ENCODE measurements at regions of chr1 and their contacts with region 1.

Region 1: DNA sequence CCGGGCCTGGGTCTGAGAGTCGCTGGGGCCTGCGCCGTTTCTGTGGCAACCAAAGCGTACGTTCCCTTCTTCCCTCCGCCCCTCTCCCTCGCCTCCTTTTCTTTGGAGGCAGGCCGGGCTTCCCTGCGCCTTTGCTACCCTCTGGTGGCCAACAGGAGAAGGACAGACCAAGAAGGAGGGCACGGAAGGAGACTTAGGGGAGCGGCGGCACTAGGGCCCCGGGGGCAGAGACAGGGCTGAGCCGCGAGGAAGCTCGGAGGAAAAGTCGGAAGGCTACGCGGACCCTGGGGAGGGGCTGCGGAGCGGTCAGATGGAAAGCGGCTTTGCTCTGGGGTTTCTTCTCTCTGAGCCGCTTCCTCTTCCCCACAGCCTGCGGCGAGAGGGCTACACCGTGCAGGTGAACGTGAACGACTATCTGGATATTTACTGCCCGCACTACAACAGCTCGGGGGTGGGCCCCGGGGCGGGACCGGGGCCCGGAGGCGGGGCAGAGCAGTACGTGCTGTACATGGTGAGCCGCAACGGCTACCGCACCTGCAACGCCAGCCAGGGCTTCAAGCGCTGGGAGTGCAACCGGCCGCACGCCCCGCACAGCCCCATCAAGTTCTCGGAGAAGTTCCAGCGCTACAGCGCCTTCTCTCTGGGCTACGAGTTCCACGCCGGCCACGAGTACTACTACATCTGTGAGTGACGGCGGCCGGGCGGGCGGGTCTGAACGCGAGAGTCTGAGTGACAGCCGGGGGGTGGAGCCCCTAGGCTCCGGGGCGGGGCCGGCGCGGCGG is 6.3 kb downstream of the EFNA3 start:
- DNase-seq: peak; percentile 80 to 94 (median 92)
- ATAC-seq: peak; percentile 73
- H3K4me3 ChIP-seq: peak overlapping the region; percentile 82 to 92
- H3K4me3 Mint-ChIP-seq: peak overlapping the region; percentile 95
- H3K27ac ChIP-seq: peak overlapping the region; percentile 57 to 85
- H3K27ac Mint-ChIP-seq: peak overlapping the region; percentile 90
- H3K4me1 ChIP-seq: peaks cover 54% of the 10 kb centered on the region
- H3K4me1 Mint-ChIP-seq: peaks cover 39% of the 10 kb centered on the region
- H3K27me3 ChIP-seq: peaks cover 39 to 44% of the 10 kb centered on the region in 2 experiments
- H3K27me3 Mint-ChIP-seq: peaks cover 30% of the 10 kb centered on the region
- CTCF ChIP-seq: peak; percentile 84

Region 2: GRCh38 chr1:154669464-154670282 is 415.2 kb before region 1 on chr1:
- CTCF ChIA-PET with region 1: no interaction called
- POLR2A ChIA-PET with region 1: no interaction called
- intact Hi-C with region 1: loop called in 1 of 2 experiments (anchors 1 kb)
- DNase-seq: peak; percentile 48 to 86 (median 74)
- ATAC-seq: peak; percentile 100
- H3K4me3 ChIP-seq: no peak overlapping the region
- H3K4me3 Mint-ChIP-seq: no peak overlapping the region
- H3K27ac ChIP-seq: no peak overlapping the region
- H3K27ac Mint-ChIP-seq: no peak overlapping the region
- H3K4me1 ChIP-seq: peaks cover 3% of the 10 kb centered on the region
- H3K4me1 Mint-ChIP-seq: no peaks in the 10 kb centered on the region
- H3K27me3 ChIP-seq: no peaks in the 10 kb centered on the region
- H3K27me3 Mint-ChIP-seq: no peaks in the 10 kb centered on the region
- CTCF ChIP-seq: peak; percentile 80

Region 3: DNA sequence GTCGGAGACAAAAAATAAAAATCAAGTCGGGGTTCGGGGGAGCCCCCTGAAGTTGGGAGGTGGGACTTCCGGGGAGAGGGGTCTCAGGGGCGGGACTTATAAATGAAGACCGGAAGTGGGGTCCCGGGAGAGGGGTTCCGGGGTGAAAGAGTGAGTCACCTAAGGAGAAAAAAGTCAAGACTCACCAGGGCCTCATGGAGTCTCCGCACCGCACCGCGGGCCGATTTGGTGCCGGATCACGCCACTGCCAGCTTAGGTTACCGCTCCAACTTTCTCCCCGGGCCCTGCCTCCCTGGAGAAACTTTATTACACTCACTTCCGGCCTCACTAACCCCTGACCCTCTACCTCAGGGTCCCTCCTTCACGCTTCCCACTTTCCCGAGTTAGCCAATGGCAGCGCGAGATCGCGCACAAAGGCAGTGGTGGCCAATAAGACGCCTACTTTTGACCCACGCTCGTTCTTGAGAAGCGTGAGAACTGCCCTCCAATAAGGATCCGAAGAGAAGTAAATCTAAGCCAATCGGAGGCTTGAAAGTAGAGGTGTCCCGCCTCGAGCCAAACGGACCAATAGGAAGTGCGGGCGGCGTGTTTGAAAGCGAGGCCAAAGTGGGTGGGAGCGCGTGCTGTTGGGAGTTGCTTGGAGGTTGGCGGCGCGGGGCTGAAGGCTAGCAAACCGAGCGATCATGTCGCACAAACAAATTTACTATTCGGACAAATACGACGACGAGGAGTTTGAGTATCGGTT is 110.7 kb before region 1 on chr1 and contains the start of gene CKS1B:
- CTCF ChIA-PET with region 1: no interaction called
- POLR2A ChIA-PET with region 1: no interaction called
- intact Hi-C with region 1: loop called in 1 of 2 experiments (anchors 1 kb)
- DNase-seq: peak; percentile 92 to 99 (median 97)
- ATAC-seq: peak; percentile 86
- H3K4me3 ChIP-seq: peak within 1 kb of the TSS; percentile 67
- H3K4me3 Mint-ChIP-seq: no peak within 1 kb of the TSS
- H3K27ac ChIP-seq: peak within 1 kb of the TSS; percentile 90 to 95
- H3K27ac Mint-ChIP-seq: no peak within 1 kb of the TSS
- H3K4me1 ChIP-seq: peaks cover 23% of the 10 kb centered on the region
- H3K4me1 Mint-ChIP-seq: peaks cover 26% of the 10 kb centered on the region
- H3K27me3 ChIP-seq: no peaks in the 10 kb centered on the region
- H3K27me3 Mint-ChIP-seq: no peaks in the 10 kb centered on the region
- CTCF ChIP-seq: no peak
- total RNA-seq, gene CKS1B: 2.3 to 2.9 TPM

Region 4: GRCh38 chr1:155070721-155071569 is 14.0 kb before region 1 on chr1:
- CTCF ChIA-PET with region 1: interaction called, 219 read pairs
- POLR2A ChIA-PET with region 1: interaction called, 6 read pairs
- intact Hi-C with region 1: loop called (anchors 1 kb)
- DNase-seq: peak; percentile 55 to 91 (median 80)
- ATAC-seq: peak; percentile 99
- H3K4me3 ChIP-seq: peak overlapping the region; percentile 41 to 55
- H3K4me3 Mint-ChIP-seq: peak overlapping the region; percentile 54
- H3K27ac ChIP-seq: peak overlapping the region; percentile 43 to 53
- H3K27ac Mint-ChIP-seq: no peak overlapping the region
- H3K4me1 ChIP-seq: peaks cover 30% of the 10 kb centered on the region
- H3K4me1 Mint-ChIP-seq: peaks cover 32% of the 10 kb centered on the region
- H3K27me3 ChIP-seq: no peaks in the 10 kb centered on the region
- H3K27me3 Mint-ChIP-seq: no peaks in the 10 kb centered on the region
- CTCF ChIP-seq: peak; percentile 51

Region 5: DNA sequence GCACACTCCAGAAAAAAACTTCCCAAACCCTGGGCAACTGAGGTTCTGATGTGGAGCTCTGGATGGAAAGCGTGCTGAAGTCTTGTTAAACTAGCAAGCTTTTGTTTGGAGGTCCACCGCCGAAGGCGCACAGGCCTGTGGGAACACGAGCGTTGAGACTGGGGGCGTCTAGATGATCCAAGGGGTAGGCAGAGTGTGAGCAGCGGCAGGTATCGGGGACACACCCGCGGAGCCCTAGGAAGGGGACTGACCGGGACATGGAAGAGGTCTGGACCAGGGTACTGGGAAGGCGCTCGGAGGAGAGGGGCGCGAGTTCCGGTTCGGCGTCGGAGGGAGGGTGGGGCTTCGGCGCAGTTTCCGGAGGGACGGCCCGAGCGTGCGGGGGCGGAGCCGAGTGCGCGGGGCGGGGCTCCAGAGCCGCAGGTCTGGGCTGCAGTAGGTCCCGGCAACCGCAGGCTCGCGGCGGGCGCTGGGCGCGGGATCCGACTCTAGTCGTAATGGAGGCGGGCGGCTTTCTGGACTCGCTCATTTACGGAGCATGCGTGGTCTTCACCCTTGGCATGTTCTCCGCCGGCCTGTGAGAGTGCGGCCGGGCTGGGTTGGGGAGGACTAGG is 50.6 kb after region 1 on chr1 and contains the start of gene SLC50A1:
- CTCF ChIA-PET with region 1: interaction called, 16 read pairs
- POLR2A ChIA-PET with region 1: no interaction called
- intact Hi-C with region 1: loop called (anchors 2 to 5 kb)
- DNase-seq: peak; percentile 82 to 96 (median 92)
- ATAC-seq: peak; percentile 84
- H3K4me3 ChIP-seq: peak within 1 kb of the TSS; percentile 93 to 95
- H3K4me3 Mint-ChIP-seq: peak within 1 kb of the TSS; percentile 98
- H3K27ac ChIP-seq: peak within 1 kb of the TSS; percentile 78 to 99
- H3K27ac Mint-ChIP-seq: peak within 1 kb of the TSS; percentile 99
- H3K4me1 ChIP-seq: peaks cover 29% of the 10 kb centered on the region
- H3K4me1 Mint-ChIP-seq: peaks cover 49% of the 10 kb centered on the region
- H3K27me3 ChIP-seq: no peaks in the 10 kb centered on the region
- H3K27me3 Mint-ChIP-seq: no peaks in the 10 kb centered on the region
- CTCF ChIP-seq: no peak
- total RNA-seq, gene SLC50A1: 12.9 to 14.2 TPM

Region 6: DNA sequence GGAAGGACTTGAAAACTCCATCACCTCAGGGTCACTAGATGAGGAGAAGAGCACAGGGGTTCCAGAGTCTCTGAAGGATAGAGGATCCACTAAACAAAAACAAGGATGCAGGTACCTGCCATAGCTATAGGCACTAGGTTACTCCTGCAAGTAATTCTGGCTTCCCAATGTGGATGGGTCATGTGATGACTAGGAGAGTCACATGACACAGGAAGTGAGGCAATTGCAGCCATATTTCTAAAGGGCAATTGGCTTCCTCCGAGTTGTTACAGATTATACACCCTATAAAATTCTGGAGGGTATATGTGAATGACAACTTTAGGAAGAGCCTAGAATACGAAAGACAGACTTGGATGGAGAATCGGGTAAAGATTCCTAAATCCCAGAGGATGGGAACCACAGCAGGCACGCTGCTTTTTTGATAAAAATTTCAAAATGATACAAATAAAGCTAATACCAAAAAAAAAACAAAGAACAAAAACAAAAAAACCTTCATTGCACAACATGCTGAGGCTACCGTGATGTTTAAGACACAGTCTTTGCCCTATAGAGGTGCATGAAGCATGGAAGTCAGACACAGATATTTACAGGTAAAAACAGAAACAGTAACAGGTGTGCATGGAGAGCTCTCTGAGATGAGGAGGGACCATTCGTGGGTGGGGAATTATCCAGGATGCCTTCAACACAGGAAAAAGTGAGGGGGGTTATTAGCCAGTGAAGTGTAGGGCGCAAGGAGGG is 134.1 kb after region 1 on chr1:
- CTCF ChIA-PET with region 1: no interaction called
- POLR2A ChIA-PET with region 1: no interaction called
- intact Hi-C with region 1: no loop called
- DNase-seq: peak in 1 of 9 experiments; percentile 59
- ATAC-seq: no peak
- H3K4me3 ChIP-seq: no peak overlapping the region
- H3K4me3 Mint-ChIP-seq: no peak overlapping the region
- H3K27ac ChIP-seq: peak overlapping the region in 1 of 2 experiments; percentile 57
- H3K27ac Mint-ChIP-seq: no peak overlapping the region
- H3K4me1 ChIP-seq: peaks cover 4% of the 10 kb centered on the region
- H3K4me1 Mint-ChIP-seq: peaks cover 10% of the 10 kb centered on the region
- H3K27me3 ChIP-seq: no peaks in the 10 kb centered on the region
- H3K27me3 Mint-ChIP-seq: no peaks in the 10 kb centered on the region
- CTCF ChIP-seq: no peak